ENCODE measurements at regions of chr18 and their contacts with region 1.

Region 1: GRCh38 chr18:3062798-3063680 is 50.1 kb upstream of the LPIN2 start:
- DNase-seq: no peak
- H3K4me3 ChIP-seq: no peak overlapping the region
- H3K27ac ChIP-seq: no peak overlapping the region
- H3K27me3 ChIP-seq: no peaks in the 10 kb centered on the region
- CTCF ChIP-seq: peak; percentile 81

Region 2: GRCh38 chr18:2776601-2777000 is 286.4 kb before region 1 on chr18:
- CTCF ChIA-PET with region 1: no interaction called
- POLR2A ChIA-PET with region 1: no interaction called
- DNase-seq: no peak
- H3K4me3 ChIP-seq: no peak overlapping the region
- H3K27ac ChIP-seq: no peak overlapping the region
- H3K27me3 ChIP-seq: no peaks in the 10 kb centered on the region
- CTCF ChIP-seq: no peak

Region 3: GRCh38 chr18:2932247-2933181 is 130.5 kb before region 1 on chr18:
- CTCF ChIA-PET with region 1: interaction called, 18 read pairs
- POLR2A ChIA-PET with region 1: no interaction called
- DNase-seq: peak; percentile 21
- H3K4me3 ChIP-seq: no peak overlapping the region
- H3K27ac ChIP-seq: no peak overlapping the region
- H3K27me3 ChIP-seq: no peaks in the 10 kb centered on the region
- CTCF ChIP-seq: peak; percentile 64

Region 4: GRCh38 chr18:2948038-2948437 is 115.0 kb before region 1 on chr18:
- CTCF ChIA-PET with region 1: interaction called, 12 read pairs
- POLR2A ChIA-PET with region 1: no interaction called
- DNase-seq: no peak
- H3K4me3 ChIP-seq: no peak overlapping the region
- H3K27ac ChIP-seq: no peak overlapping the region
- H3K27me3 ChIP-seq: no peaks in the 10 kb centered on the region
- CTCF ChIP-seq: peak; percentile 56

Region 5: GRCh38 chr18:3074087-3074486 is 11.0 kb after region 1 on chr18:
- CTCF ChIA-PET with region 1: interaction called, 23 read pairs
- POLR2A ChIA-PET with region 1: no interaction called
- DNase-seq: no peak
- H3K4me3 ChIP-seq: no peak overlapping the region
- H3K27ac ChIP-seq: no peak overlapping the region
- H3K27me3 ChIP-seq: no peaks in the 10 kb centered on the region
- CTCF ChIP-seq: no peak

Region 6: DNA sequence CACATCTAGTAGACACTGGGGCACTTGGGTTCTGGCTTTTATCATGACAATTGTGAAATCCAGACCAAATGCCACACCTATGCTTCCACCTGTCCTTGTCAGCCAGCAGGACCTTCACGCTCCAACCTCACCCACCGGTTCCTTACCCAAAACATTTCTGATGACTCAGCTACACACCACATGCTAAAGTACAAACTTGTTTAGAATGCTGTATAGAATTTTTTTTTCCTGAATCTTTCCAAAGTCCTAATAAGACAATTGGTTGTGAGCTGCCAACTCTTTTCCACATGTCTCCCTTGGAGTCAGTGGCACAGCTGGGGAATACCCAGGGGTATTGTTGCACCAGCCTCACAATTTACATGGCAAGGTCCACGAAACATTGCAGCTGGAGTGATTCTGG is 25.4 kb after region 1 on chr18:
- CTCF ChIA-PET with region 1: interaction called, 15 read pairs
- POLR2A ChIA-PET with region 1: no interaction called
- DNase-seq: no peak
- H3K4me3 ChIP-seq: no peak overlapping the region
- H3K27ac ChIP-seq: no peak overlapping the region
- H3K27me3 ChIP-seq: no peaks in the 10 kb centered on the region
- CTCF ChIP-seq: no peak

Measured in AG04450 (cell line).